ENCODE measurements at regions of chr10 and their contacts with region 1.

Region 1: DNA sequence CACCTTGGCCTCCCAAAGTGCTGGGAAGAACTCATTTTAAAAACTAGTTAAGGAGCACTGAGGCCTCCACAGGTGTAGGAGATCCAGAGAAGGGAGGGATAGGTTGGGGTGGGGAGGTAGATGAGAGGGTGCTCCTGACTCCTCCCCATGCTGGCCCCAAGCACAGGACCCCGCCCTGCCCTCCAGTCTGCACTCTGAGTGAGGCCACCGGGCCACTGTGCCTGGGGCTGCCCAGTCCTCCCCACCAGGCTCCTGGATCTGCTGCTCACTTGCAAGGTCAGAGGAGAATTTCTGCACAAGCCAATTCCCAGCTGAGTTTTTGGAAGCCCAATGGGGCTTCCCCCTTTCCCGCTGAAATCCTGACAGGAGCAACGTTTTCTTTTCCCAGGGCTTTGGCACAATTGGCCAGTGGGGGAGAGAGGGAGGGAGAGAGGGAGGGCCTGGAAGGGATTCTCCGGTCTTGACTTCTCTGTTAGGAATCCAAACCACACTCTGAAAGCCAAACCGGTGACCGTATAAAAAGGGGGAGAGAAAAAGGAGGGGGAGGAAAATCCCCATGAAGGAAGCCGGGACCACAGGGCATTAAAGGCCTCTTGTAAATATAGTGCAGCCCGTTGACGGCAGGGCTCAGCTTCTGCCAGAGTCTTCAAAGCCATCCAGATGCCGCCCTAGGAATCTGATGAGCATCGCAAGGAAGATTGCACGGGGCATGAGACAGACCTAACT is 116.2 kb downstream of the SH3PXD2A start:
- DNase-seq: no peak
- H3K4me3 Mint-ChIP-seq: no peak overlapping the region
- H3K27ac Mint-ChIP-seq: no peak overlapping the region
- H3K4me1 Mint-ChIP-seq: peaks cover 2% of the 10 kb centered on the region
- H3K27me3 Mint-ChIP-seq: no peaks in the 10 kb centered on the region

Region 2: DNA sequence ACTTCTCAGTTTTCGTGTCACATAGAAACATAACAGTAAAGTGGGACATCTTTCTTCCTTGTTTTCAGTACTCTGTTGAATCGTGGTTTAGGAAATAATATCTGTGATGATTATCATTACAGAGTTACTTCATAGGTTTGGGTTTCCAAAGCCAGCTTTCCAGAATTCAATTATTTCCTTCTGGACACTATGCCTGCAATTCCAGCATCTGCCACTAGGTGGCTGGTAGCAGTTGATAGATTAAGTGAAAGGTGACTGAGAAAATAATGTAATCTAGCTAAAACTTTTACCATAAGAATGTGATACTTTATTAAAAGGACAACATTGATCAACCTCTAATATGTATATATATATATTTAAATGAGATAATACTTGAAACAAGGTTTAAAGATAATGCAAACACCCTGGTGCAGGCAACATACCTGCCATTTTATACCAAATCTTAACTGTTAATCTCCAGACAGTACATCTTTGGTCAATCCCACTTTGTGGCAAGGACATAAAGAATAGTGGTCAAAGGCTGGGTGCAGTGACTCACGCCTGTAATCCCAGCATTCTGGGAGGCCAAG is 13.6 kb after region 1 on chr10:
- CTCF ChIA-PET with region 1: interaction called, 13 read pairs
- POLR2A ChIA-PET with region 1: no interaction called
- intact Hi-C with region 1: no loop called
- DNase-seq: peak; percentile 38
- H3K4me3 Mint-ChIP-seq: no peak overlapping the region
- H3K27ac Mint-ChIP-seq: no peak overlapping the region
- H3K4me1 Mint-ChIP-seq: peaks cover 20% of the 10 kb centered on the region
- H3K27me3 Mint-ChIP-seq: no peaks in the 10 kb centered on the region

Region 3: GRCh38 chr10:104121520-104122224 is 382.5 kb after region 1 on chr10 and contains the start of gene SFR1:
- CTCF ChIA-PET with region 1: no interaction called
- POLR2A ChIA-PET with region 1: no interaction called
- intact Hi-C with region 1: no loop called
- DNase-seq: peak; percentile 100
- H3K4me3 Mint-ChIP-seq: peak within 1 kb of the TSS; percentile 90
- H3K27ac Mint-ChIP-seq: peak within 1 kb of the TSS; percentile 97
- H3K4me1 Mint-ChIP-seq: peaks cover 33% of the 10 kb centered on the region
- H3K27me3 Mint-ChIP-seq: no peaks in the 10 kb centered on the region
- total RNA-seq, gene SFR1: 16.8 to 19.2 TPM